IMR-90 (cell line): ENCODE measurements at regions of chr18 and their contacts with region 1.

Region 1: DNA sequence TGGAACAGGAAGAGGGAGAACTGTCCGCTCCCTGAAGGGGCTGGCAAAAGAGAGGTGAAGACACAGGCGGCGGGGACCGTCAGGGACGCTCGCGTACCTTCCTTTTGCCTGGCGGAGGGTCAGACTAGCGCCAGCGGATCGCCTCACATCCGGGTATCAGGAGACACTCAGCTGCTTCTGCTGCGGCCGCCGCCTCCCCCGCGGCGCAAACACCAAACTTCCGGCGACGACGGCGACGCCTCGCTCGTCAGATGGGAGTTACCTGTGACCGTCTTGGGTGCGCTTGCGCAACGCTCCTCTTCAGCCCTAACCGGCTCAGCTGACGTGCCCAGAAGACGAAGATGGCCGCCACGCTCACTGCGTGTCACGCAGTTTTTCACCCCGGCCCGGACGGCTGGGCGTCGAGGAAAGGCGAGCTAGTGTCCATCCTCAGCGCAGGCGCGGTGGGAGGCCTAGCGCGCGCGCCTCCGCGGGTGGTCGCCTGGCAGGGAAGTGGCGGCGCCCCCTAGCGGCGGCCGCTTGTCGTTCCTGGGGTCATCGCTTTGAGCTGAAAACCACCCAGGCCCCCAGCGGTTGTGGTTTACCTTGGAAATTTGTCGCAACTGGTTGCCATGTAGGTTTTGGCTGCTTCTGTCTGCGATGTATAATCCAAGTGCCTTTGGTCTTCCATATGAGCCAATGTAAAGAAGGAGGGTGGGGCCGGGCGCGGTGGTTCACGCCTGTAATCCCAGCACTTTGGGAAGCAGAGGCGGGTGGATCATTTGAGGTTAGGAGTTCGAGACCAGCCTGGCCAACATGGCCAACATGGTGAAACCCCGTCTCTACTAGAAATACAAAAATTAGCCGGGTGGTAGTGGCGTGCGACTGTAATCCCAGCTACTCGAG is at the start of gene ESCO1:
- DNase-seq: peak; percentile 98
- ATAC-seq: peak; percentile 92
- H3K4me3 ChIP-seq: peak within 1 kb of the TSS; percentile 81
- H3K27ac ChIP-seq: peak within 1 kb of the TSS; percentile 90
- H3K4me1 ChIP-seq: 0 out of 2 replicates have a peak, but pooled peaks cover 3% of the 10 kb centered on the region
- H3K27me3 ChIP-seq: no peaks in the 10 kb centered on the region
- CTCF ChIP-seq: peak; percentile 98
- POLR2A ChIP-seq: peak; percentile 93
- RAD21 ChIP-seq: peak; percentile 38; the same call in 1 of the 2 replicates
- total RNA-seq, gene ESCO1: 4.5 and 11.4 TPM in 2 replicates

Region 2: DNA sequence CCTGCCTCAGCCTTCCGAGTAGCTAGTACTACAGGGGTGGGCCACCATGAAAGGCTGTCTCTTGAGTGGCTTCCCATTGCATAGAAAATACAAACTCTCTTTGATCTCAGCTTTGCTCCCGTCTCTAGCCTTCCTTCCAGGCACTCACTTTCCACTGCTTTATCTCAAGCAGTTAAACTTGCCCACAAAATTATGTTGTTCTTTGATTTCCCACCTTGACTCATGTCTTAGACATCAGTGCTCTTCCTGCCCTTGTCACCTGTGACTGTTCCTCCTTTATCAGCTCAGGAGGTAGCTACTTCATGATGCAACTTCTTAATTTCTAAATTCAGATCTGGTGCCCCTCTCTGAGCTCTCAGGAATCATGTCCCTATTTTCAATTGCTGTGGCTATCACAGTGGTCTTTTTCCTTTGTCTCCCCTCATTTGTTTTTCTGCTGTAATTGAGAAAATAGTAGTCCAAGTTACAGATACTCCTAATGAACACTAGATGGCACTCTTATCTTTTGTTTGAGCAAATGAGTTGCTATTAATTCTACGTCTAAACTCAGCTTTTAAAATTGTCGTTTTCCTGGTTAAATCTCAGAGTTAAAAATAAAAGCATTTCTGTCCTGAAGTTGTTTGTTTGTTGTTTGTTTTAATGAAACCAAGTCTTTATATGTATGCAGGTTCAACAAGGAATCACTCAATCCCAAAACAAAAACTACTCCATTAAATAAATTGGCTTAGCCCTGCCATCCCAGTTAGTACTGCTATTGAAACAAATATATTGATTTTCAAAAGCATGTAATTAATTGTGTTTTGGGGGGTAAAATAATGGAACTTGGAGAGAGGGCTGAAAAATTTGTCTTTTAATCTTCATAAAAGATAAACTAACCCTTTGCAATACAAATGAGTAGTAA is 405.6 kb before region 1 on chr18:
- CTCF ChIA-PET with region 1: no interaction called
- POLR2A ChIA-PET with region 1: no interaction called
- dilution Hi-C with region 1: no loop called
- in situ Hi-C with region 1: no loop called
- intact Hi-C with region 1: loop called (anchors 5 kb)
- DNase-seq: peak; percentile 58
- ATAC-seq: peak; percentile 71; the same call in 1 of the 2 replicates
- H3K4me3 ChIP-seq: no peak overlapping the region
- H3K27ac ChIP-seq: no peak overlapping the region
- H3K4me1 ChIP-seq: no peaks in the 10 kb centered on the region
- H3K27me3 ChIP-seq: peaks cover 11% of the 10 kb centered on the region; the same call in 1 of the 2 replicates
- CTCF ChIP-seq: peak; percentile 77
- POLR2A ChIP-seq: no peak
- RAD21 ChIP-seq: peak; percentile 78

Region 3: GRCh38 chr18:21489119-21489750 is 111.5 kb before region 1 on chr18:
- CTCF ChIA-PET with region 1: interaction called, 5 read pairs
- POLR2A ChIA-PET with region 1: no interaction called
- dilution Hi-C with region 1: no loop called
- in situ Hi-C with region 1: no loop called
- intact Hi-C with region 1: loop called (anchors 1 kb)
- DNase-seq: peak; percentile 66
- ATAC-seq: peak; percentile 77
- H3K4me3 ChIP-seq: no peak overlapping the region
- H3K27ac ChIP-seq: no peak overlapping the region
- H3K4me1 ChIP-seq: 0 out of 2 replicates have a peak, but pooled peaks cover 2% of the 10 kb centered on the region
- H3K27me3 ChIP-seq: no peaks in the 10 kb centered on the region
- CTCF ChIP-seq: peak; percentile 76
- POLR2A ChIP-seq: no peak
- RAD21 ChIP-seq: peak; percentile 71

Region 4: GRCh38 chr18:21612125-21612991 is 11.6 kb after region 1 on chr18 and contains the start of gene SNRPD1:
- CTCF ChIA-PET with region 1: interaction called, 14 read pairs
- POLR2A ChIA-PET with region 1: interaction called, 6 read pairs
- dilution Hi-C with region 1: no loop called
- in situ Hi-C with region 1: no loop called
- intact Hi-C with region 1: no loop called
- DNase-seq: peak; percentile 90
- ATAC-seq: peak; percentile 100
- H3K4me3 ChIP-seq: peak within 1 kb of the TSS; percentile 85
- H3K27ac ChIP-seq: peak within 1 kb of the TSS; percentile 95
- H3K4me1 ChIP-seq: peaks cover 2% of the 10 kb centered on the region; the same call in 1 of the 2 replicates
- H3K27me3 ChIP-seq: no peaks in the 10 kb centered on the region
- CTCF ChIP-seq: peak; percentile 96
- POLR2A ChIP-seq: peak; percentile 92
- RAD21 ChIP-seq: peak; percentile 27; the same call in 1 of the 2 replicates
- total RNA-seq, gene SNRPD1: 6.8 and 24.7 TPM in 2 replicates

Region 5: GRCh38 chr18:22169007-22169864 is 568.5 kb after region 1 on chr18 and contains the start of gene GATA6:
- CTCF ChIA-PET with region 1: no interaction called
- POLR2A ChIA-PET with region 1: no interaction called
- dilution Hi-C with region 1: no loop called
- in situ Hi-C with region 1: no loop called
- intact Hi-C with region 1: no loop called
- DNase-seq: peak; percentile 91
- ATAC-seq: peak; percentile 78
- H3K4me3 ChIP-seq: peak within 1 kb of the TSS; percentile 77
- H3K27ac ChIP-seq: peak within 1 kb of the TSS; percentile 75
- H3K4me1 ChIP-seq: peaks cover 12% of the 10 kb centered on the region
- H3K27me3 ChIP-seq: peaks cover 45% of the 10 kb centered on the region
- CTCF ChIP-seq: peak; percentile 65
- POLR2A ChIP-seq: peak; percentile 98
- RAD21 ChIP-seq: peak; percentile 59
- total RNA-seq, gene GATA6: 2.5 and 3.3 TPM in 2 replicates